BJ (cell line): ENCODE measurements at regions of chr6 and their contacts with region 1.

Region 1: DNA sequence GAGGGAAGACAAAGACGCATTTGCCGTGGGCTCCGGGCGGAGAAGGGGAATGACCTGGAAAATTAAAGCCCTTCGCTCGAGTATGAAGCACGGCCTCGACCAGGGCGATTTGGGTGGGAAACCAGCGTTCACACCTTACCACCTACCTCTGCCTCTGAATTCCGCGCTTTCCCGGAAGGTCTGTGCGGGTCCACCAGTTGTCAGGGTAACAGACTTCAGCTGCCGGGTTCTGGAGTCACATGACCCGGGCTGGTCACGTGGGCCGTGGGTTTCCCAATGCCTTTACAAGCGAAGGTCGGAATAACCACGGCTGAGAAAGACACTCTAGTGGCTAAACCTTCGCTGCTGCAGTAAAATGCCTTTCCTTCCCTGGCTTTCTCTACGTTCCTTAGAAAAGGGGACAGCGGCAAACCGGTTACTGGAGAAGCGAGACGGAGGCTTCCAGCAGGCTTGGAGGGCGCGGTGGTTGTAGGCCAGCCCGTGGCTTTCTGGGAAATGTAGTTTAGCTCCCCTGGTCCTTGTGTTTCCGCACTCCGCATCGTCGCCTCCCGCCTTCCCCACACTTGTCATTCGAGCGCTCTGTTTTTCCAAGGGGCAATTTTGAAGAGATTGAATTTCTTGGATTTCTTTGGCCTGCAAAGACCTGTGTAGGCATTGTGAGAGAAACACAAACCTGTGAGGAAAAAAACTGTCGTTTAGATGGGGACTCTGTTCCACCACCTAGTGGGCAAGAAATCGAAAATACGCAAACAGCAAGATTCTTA is at the start of gene CEP162:
- DNase-seq: peak; percentile 47
- H3K4me3 ChIP-seq: peak within 1 kb of the TSS; percentile 90
- H3K27me3 ChIP-seq: no peaks in the 10 kb centered on the region; the same call in 1 of the 2 replicates
- CTCF ChIP-seq: peak; percentile 75
- polyA plus RNA-seq, gene CEP162: 0.75 and 2.2 TPM in 2 replicates

Region 2: DNA sequence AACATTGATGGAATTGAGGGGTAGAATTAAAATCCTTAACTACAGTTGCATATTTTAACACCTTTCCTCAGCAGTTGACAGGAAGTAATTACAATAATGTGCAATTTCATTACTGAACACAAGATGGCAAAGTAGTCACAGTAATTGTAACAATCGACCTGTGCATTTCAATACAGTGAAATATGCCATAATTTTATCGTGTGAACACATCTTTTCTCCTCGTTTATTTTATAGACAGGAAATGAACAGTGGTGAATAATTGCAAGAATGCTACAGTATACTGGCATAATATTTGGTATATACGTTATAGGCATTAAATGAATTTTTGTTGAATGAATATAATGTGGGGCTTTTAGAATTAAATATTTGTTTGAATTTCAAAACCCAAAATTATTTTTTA is 343.1 kb before region 1 on chr6:
- CTCF ChIA-PET with region 1: interaction called, 12 read pairs
- POLR2A ChIA-PET with region 1: no interaction called
- DNase-seq: no peak
- H3K4me3 ChIP-seq: no peak overlapping the region
- H3K27me3 ChIP-seq: no peaks in the 10 kb centered on the region
- CTCF ChIP-seq: peak; percentile 54

Region 3: GRCh38 chr6:84204011-84204410 is 23.6 kb before region 1 on chr6:
- CTCF ChIA-PET with region 1: no interaction called
- POLR2A ChIA-PET with region 1: no interaction called
- DNase-seq: no peak
- H3K4me3 ChIP-seq: no peak overlapping the region
- H3K27me3 ChIP-seq: no peaks in the 10 kb centered on the region
- CTCF ChIP-seq: no peak

Region 4: GRCh38 chr6:84243240-84243639 is 15.6 kb after region 1 on chr6:
- CTCF ChIA-PET with region 1: interaction called, 14 read pairs
- POLR2A ChIA-PET with region 1: no interaction called
- DNase-seq: no peak
- H3K4me3 ChIP-seq: no peak overlapping the region
- H3K27me3 ChIP-seq: peaks cover 2% of the 10 kb centered on the region; the same call in 1 of the 2 replicates
- CTCF ChIP-seq: 0 out of 2 replicates have a peak, but pooled peaks have one; percentile 9